CD4-positive, alpha-beta T cell (primary cell): ENCODE measurements at regions of chr17 and their contacts with region 1.

Region 1: GRCh38 chr17:50872710-50873424 is 6.7 kb upstream of the TOB1 start:
- DNase-seq: peak in 11 of 14 experiments; percentile 24 to 82 (median 47)
- ATAC-seq: peak; percentile 55
- H3K4me3 ChIP-seq: no peak overlapping the region
- H3K4me3 Mint-ChIP-seq: peak overlapping the region; percentile 49
- H3K27ac ChIP-seq: no peak overlapping the region
- H3K27ac Mint-ChIP-seq: peak overlapping the region; percentile 76
- H3K4me1 ChIP-seq: peaks cover 36% of the 10 kb centered on the region
- H3K4me1 Mint-ChIP-seq: peaks cover 53% of the 10 kb centered on the region
- H3K27me3 ChIP-seq: no peaks in the 10 kb centered on the region
- H3K27me3 Mint-ChIP-seq: no peaks in the 10 kb centered on the region
- CTCF ChIP-seq: no peak

Region 2: GRCh38 chr17:50883850-50884438 is 11.1 kb after region 1 on chr17:
- CTCF ChIA-PET with region 1: interaction called, 4 read pairs
- POLR2A ChIA-PET with region 1: interaction called, 125 read pairs
- intact Hi-C with region 1: no loop called
- DNase-seq: peak in 2 of 14 experiments; percentile 31 to 41
- ATAC-seq: no peak
- H3K4me3 ChIP-seq: no peak overlapping the region
- H3K4me3 Mint-ChIP-seq: no peak overlapping the region
- H3K27ac ChIP-seq: no peak overlapping the region
- H3K27ac Mint-ChIP-seq: peak overlapping the region; percentile 37
- H3K4me1 ChIP-seq: peaks cover 37% of the 10 kb centered on the region
- H3K4me1 Mint-ChIP-seq: peaks cover 50% of the 10 kb centered on the region
- H3K27me3 ChIP-seq: no peaks in the 10 kb centered on the region
- H3K27me3 Mint-ChIP-seq: no peaks in the 10 kb centered on the region
- CTCF ChIP-seq: no peak

Region 3: DNA sequence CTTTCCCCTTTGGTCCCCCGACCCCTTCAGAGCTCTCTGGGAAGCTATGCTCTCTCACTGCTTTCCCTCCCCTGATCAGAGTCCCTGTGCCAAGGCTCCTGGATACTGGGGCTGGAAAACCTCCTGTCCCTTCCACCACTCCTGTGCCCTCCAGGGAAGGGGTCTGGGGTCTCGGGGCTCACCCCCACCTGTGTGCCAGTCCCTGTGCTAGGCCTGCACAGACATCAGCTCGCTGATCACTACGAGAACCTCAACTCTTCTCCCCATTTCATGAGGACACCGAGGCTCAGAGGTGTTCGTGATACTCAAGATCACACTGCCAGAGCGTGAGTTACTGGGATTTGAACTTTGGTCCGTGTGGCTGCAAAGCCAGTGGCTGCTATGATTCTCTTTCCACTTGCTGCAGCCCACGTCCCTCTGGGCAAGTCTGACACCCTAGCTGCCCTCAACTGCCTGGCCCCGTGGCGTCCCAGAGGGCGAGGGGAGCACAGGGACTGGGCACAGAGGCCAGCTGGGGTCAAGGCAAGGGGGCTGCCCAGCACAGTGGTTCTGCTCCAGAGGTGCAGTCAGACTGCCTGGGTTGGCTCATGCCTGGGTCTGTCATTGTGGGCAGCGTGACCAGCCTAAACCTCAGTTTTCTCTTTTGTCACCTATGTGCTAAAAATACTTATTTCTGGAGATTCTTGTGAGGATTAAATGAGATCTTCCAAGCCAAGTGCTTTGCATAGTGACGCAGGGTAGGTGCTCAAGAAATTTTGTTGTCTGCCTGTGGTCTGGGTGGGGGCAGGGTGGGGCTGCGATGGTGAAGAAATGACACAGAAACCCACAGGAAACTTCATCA is 37.1 kb after region 1 on chr17:
- CTCF ChIA-PET with region 1: interaction called, 5 read pairs
- POLR2A ChIA-PET with region 1: interaction called, 278 read pairs
- intact Hi-C with region 1: loop called (anchors 1 to 2 kb)
- DNase-seq: peak; percentile 65 to 95 (median 80)
- ATAC-seq: peak; percentile 89
- H3K4me3 ChIP-seq: peak overlapping the region; percentile 4
- H3K4me3 Mint-ChIP-seq: peak overlapping the region; percentile 83
- H3K27ac ChIP-seq: peak overlapping the region; percentile 67 to 81
- H3K27ac Mint-ChIP-seq: peak overlapping the region; percentile 86
- H3K4me1 ChIP-seq: peaks cover 92% of the 10 kb centered on the region
- H3K4me1 Mint-ChIP-seq: peaks cover 64% of the 10 kb centered on the region
- H3K27me3 ChIP-seq: no peaks in the 10 kb centered on the region
- H3K27me3 Mint-ChIP-seq: no peaks in the 10 kb centered on the region
- CTCF ChIP-seq: peak; percentile 6

Region 4: DNA sequence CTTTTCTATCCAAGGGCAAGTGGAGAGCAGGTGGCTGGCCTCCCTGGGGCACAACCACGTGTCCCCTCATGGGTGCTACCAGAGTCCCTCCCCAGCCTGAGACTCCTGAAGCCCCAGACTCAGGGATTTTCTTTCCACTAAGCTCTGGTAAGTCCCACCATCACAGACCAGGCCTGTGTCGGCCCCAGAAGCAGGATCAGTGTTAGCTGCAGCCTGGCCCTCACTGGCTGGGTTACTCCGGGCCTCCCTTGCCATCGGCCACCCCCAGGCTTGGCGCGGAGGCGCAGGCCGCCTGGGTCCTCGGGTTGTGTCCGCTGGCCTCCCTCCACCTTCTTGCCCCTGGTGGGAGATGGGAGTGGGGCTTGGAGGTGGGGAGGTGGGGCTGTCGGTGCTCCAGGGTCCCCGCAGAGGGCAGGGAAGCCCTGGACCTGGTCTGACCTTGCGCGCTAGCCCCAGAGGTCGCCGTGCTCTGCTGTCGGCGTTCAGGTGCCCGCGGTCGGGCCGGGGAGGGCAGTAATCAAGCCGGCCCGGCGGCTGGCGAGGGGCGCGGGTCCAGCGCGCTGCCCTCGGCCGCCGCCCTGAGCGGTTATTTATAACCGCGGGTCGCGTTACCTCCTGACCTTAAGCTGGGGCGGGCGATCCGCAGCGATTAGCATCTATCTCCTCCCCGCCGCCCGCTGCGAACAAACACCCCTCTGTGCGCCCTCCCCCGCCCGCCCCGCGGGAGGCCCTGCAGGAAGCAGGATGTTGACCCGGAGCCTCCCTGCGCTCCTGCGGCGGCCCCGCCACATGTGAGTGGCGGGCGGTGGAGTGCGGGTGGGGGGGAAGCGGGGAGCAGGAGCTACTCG is 71.4 kb after region 1 on chr17:
- CTCF ChIA-PET with region 1: no interaction called
- POLR2A ChIA-PET with region 1: interaction called, 211 read pairs
- intact Hi-C with region 1: no loop called
- DNase-seq: peak; percentile 55 to 88 (median 80)
- ATAC-seq: peak; percentile 89
- H3K4me3 ChIP-seq: peak overlapping the region; percentile 65
- H3K4me3 Mint-ChIP-seq: peak overlapping the region; percentile 83
- H3K27ac ChIP-seq: peak overlapping the region; percentile 68 to 77
- H3K27ac Mint-ChIP-seq: peak overlapping the region; percentile 85
- H3K4me1 ChIP-seq: peaks cover 61% of the 10 kb centered on the region
- H3K4me1 Mint-ChIP-seq: peaks cover 52% of the 10 kb centered on the region
- H3K27me3 ChIP-seq: no peaks in the 10 kb centered on the region
- H3K27me3 Mint-ChIP-seq: no peaks in the 10 kb centered on the region
- CTCF ChIP-seq: no peak

Region 5: DNA sequence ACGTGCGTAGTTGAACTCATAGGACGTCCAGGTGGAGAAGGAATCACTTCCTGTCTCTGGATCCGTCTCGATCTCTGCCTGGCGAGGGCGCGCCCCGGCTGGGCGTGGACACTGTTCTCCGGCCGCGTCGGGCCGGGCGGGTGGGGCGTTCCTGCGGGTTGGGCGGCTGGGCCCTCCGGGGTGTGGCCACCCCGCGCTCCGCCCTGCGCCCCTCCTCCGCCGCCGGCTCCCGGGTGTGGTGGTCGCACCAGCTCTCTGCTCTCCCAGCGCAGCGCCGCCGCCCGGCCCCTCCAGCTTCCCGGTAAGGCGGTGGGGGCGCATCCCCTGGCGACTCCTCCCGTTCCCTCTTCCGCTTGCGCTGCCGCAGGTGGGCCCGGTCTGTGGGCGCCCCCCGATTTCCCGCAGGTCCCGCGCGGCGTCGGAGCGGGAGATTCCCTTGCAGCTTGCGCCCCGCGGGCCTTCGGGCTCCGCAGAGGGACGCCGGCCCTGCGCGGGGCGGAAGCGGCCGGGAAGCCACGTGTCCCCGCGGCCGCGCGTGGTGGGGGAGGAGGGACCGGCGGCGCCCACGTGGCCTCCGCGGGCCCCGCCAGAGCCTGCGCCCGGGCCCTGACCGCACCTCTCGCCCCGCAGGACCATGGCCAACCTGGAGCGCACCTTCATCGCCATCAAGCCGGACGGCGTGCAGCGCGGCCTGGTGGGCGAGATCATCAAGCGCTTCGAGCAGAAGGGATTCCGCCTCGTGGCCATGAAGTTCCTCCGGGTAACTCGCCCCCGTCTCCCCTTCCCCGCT is 293.5 kb after region 1 on chr17 and contains the start of gene NME2:
- CTCF ChIA-PET with region 1: no interaction called
- POLR2A ChIA-PET with region 1: no interaction called
- intact Hi-C with region 1: no loop called
- DNase-seq: peak; percentile 24 to 83 (median 50)
- ATAC-seq: peak; percentile 69
- H3K4me3 ChIP-seq: peak within 1 kb of the TSS; percentile 76
- H3K4me3 Mint-ChIP-seq: peak within 1 kb of the TSS; percentile 95
- H3K27ac ChIP-seq: peak within 1 kb of the TSS; percentile 50 to 70
- H3K27ac Mint-ChIP-seq: peak within 1 kb of the TSS; percentile 93
- H3K4me1 ChIP-seq: peaks cover 20% of the 10 kb centered on the region
- H3K4me1 Mint-ChIP-seq: peaks cover 20% of the 10 kb centered on the region
- H3K27me3 ChIP-seq: no peaks in the 10 kb centered on the region
- H3K27me3 Mint-ChIP-seq: no peaks in the 10 kb centered on the region
- CTCF ChIP-seq: no peak
- total RNA-seq, gene NME2: 135 to 138 TPM